Adrenal gland (tissue), 19 donors: ENCODE measurements at regions of chr3 and their contacts with region 1.

Region 1: DNA sequence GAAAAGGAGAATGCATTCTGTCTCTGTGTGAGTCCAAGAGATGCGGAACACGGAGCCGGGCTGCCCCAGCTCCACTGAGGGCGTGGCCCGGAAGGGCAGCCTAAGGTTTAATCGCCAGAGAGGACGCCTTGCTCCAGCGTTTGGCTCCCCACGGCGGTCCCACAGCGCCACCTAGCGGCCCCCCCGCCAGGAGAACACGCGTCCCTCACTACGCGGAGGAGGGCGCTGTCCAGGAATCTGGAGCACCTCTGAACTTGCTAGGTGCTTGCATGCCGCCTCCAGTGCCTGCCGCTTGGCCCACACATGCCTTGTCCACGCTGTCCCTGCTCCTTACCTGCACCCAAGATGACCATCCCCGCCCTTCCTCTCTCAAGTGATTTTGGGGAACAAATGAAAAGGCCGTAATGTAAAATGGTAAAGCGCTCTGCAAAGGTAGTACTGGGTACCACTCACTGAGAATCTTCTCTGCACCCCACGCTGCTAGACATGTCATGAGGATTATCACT is 14.4 kb upstream of the MRPS22 start:
- DNase-seq: peak; percentile 89 to 94 (median 91)
- H3K4me3 ChIP-seq: no peak overlapping the region
- H3K27ac ChIP-seq: no peak overlapping the region
- H3K4me1 ChIP-seq: no peaks in the 10 kb centered on the region
- H3K27me3 ChIP-seq: no peaks in the 10 kb centered on the region
- CTCF ChIP-seq: peak; percentile 98 to 100 (median 99)
- POLR2A ChIP-seq: no peak

Region 2: GRCh38 chr3:138935848-138936740 is 393.3 kb before region 1 on chr3:
- intact Hi-C with region 1: loop called (anchors 5 to 10 kb)
- DNase-seq: peak; percentile 84 to 91 (median 88)
- H3K4me3 ChIP-seq: peak overlapping the region in 1 of 4 donors; percentile 54
- H3K27ac ChIP-seq: peak overlapping the region in 1 of 5 donors; percentile 45
- H3K4me1 ChIP-seq: peaks cover 0 to 32% of the 10 kb centered on the region in 2 donors
- H3K27me3 ChIP-seq: peaks cover 46% of the 10 kb centered on the region
- CTCF ChIP-seq: peak; percentile 82 to 95 (median 90)
- POLR2A ChIP-seq: no peak

Region 3: DNA sequence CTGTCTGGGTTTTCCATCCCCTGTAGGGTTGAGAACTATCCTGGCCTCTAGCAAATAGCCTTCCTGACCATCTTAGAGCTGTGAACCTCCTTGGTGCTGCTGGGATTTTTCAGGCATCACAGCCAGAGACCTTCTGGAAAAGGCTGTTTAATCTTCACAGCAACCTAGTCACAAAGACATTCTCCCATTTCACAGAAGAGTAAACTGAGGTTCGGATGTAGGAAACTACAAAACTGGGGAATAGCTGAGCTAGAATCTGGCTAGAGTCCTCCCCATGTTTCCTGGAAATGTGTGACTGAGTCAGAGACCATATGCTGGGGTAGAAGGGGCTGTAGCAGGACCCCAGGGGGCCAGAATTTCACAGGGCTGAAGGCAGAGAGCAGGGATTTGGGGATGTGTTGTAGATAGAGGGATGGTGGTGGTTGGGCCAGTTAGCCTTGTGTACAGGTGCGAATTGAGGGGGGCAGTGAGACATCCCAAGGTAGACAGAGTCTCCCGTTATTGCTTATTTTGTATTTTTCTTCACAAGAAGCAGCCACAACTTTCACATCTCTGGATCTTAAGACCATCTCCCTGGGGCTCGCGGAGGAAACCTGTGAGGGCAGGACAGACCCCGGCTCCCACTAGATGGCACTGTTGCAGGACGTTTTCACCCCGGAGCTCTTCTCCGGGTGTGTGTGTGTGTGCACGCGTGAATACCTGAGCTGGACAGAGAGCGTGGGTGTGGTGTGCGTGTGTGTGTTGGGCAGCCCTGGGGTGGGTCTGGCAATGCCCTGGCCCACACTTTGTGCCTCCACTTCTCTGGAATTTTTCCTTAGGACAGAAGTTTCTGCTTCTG is 217.8 kb before region 1 on chr3:
- intact Hi-C with region 1: loop called (anchors 2 kb)
- DNase-seq: peak; percentile 60 to 81 (median 79)
- H3K4me3 ChIP-seq: no peak overlapping the region
- H3K27ac ChIP-seq: no peak overlapping the region
- H3K4me1 ChIP-seq: no peaks in the 10 kb centered on the region
- H3K27me3 ChIP-seq: no peaks in the 10 kb centered on the region
- CTCF ChIP-seq: peak; percentile 66 to 82 (median 76)
- POLR2A ChIP-seq: no peak

Region 4: DNA sequence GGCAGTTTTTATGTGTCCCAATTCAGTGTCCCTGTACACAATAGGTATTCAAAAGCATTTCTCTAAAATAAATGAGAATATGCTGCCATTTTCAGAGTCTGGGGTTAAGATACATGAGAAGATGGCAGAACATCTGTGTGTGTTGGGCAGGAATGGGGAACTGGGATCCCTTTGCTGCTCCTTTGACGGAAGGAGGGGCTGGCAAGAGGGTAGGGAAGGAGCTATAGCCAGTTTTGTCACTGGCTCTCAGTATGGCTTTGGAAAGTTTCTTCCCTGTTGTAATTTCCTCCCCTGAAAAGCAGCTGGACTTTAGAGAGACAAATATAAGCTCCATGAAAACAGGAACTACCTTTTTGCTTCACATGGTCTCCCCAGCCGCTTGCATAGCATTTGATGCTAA is 147.3 kb before region 1 on chr3:
- intact Hi-C with region 1: no loop called
- DNase-seq: no peak
- H3K4me3 ChIP-seq: no peak overlapping the region
- H3K27ac ChIP-seq: no peak overlapping the region
- H3K4me1 ChIP-seq: no peaks in the 10 kb centered on the region
- H3K27me3 ChIP-seq: no peaks in the 10 kb centered on the region
- CTCF ChIP-seq: no peak
- POLR2A ChIP-seq: no peak